PC-3 (cell line): ENCODE measurements at regions of chr16 and their contacts with region 1.

Region 1: DNA sequence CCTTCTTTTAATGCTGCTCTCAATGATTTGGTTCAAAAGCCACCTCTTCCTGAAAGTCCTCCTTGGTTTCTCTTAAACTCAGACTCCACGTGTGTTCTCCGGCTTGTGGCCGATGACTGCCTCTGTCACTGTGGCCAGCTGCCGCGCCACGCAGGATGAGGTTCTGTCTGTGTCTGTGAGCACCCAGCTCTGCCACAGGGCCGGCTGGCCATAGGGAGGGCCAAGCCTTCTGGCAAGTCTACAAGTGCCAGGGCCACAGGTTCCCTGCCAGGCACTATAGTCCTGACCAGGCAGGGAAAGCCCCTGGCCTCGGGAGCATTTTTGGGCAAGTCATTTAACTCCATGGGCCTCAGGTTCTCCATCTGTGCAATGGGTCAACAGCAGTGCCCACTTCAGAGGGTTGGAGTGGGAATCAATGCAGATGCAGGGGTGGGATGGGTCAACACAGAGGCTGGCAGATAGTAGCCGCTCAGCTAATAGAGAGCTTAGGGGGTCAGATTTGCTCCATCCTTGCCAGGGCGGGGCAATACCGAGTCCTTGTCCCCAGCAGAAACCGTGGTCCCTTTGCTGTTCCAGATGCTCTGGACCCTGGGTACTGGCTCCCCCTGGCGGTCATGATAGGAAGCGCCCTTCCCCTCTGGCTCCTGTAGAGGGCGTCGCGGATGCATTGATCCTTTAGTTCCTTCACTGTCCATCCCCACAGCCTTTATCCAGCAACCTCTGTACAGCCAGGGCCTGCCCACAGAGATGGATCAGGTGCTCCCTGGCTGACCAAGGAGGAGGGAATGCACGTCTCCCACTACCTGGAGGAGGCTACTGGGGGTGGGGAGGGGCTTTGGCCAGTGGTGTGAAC is 19.3 kb upstream of the ADGRG3 start:
- DNase-seq: peak; percentile 86
- ATAC-seq: peak; percentile 41
- H3K4me3 ChIP-seq: no peak overlapping the region
- H3K27ac ChIP-seq: no peak overlapping the region
- H3K4me1 ChIP-seq: peaks cover 31% of the 10 kb centered on the region
- H3K27me3 ChIP-seq: no peaks in the 10 kb centered on the region
- CTCF ChIP-seq: peak; percentile 100

Region 2: DNA sequence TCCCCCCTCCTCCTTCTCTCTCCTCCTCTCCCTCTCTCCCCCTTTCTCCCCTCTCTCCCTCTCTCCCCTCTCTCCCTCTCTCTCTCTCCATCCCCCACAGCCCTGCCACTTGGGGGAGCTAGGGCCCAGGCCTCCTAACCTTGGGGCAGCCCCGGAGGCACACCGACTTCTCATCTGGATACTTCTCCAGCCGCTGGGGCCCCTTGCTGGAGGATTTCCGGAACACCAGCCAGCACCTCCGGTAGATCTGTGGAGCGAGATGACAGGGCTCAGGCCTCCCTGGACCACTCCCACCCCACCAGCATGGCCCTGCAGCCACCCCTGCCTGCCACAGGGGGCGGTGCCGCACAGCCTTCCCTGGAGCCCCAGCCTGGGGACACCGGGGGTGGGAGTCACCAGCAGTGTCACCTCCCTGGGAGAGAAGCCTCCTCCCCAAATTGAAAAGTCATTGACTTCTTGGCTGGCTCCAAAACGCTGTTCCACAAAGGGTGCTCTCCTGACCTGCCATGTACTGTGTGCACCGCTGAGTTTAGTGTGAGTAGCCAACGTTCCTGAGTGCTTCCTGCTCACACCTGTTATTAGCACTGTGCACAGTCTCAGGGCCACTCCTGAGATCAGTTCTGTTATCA is 173.0 kb before region 1 on chr16:
- CTCF ChIA-PET with region 1: no interaction called
- POLR2A ChIA-PET with region 1: no interaction called
- intact Hi-C with region 1: no loop called
- DNase-seq: peak; percentile 15
- ATAC-seq: peak; percentile 73
- H3K4me3 ChIP-seq: no peak overlapping the region
- H3K27ac ChIP-seq: no peak overlapping the region
- H3K4me1 ChIP-seq: no peaks in the 10 kb centered on the region
- H3K27me3 ChIP-seq: no peaks in the 10 kb centered on the region
- CTCF ChIP-seq: peak; percentile 49

Region 3: GRCh38 chr16:57576429-57576870 is 72.4 kb before region 1 on chr16:
- CTCF ChIA-PET with region 1: interaction called, 3 read pairs
- POLR2A ChIA-PET with region 1: no interaction called
- intact Hi-C with region 1: loop called (anchors 1 kb)
- DNase-seq: peak; percentile 79
- ATAC-seq: peak; percentile 93
- H3K4me3 ChIP-seq: no peak overlapping the region
- H3K27ac ChIP-seq: no peak overlapping the region
- H3K4me1 ChIP-seq: no peaks in the 10 kb centered on the region
- H3K27me3 ChIP-seq: no peaks in the 10 kb centered on the region
- CTCF ChIP-seq: peak; percentile 87

Region 4: GRCh38 chr16:57591086-57591869 is 57.5 kb before region 1 on chr16:
- CTCF ChIA-PET with region 1: interaction called, 16 read pairs
- POLR2A ChIA-PET with region 1: interaction called, 3 read pairs
- intact Hi-C with region 1: loop called (anchors 2 kb)
- DNase-seq: peak; percentile 86
- ATAC-seq: peak; percentile 92
- H3K4me3 ChIP-seq: peak overlapping the region; percentile 60
- H3K27ac ChIP-seq: peak overlapping the region; percentile 99
- H3K4me1 ChIP-seq: peaks cover 16% of the 10 kb centered on the region
- H3K27me3 ChIP-seq: no peaks in the 10 kb centered on the region
- CTCF ChIP-seq: peak; percentile 95

Region 5: DNA sequence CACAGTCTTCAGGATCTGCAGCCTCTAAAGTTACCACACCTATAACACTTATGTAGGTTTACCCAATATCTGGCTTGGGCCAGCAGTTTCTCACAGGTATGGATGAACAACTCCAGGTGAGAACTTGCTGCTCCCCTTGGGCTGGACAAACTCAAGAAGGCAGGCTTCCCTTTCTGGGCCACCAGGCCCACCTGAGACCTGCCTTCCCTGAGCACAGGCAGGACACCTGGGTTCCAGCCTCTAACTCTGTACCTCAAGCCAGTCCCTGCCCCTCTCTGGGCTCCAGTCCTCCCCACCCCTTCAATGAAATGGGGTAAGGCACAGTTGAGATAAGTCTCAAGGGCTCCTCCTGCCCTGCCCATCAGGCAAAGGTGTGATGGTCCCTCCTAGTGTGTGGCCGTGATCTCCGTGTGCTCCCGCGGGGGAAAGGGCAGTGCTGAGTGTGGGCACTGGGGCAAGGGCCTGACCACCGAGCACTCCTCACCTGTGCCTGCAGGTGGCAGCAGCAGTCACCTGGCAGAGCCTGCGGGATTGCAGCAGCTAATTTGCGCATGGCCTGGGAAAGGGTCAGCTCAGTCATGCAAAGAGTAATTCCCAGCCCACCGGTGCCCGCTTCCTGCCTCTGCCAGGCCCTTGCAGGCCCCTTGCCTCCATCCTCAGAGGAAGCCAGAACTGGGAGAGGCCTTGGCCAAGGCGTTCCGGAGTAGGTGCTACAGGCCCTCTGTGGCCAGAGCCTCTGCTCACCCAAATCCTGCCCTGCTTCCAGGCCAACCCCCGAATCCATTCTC is 48.6 kb before region 1 on chr16:
- CTCF ChIA-PET with region 1: interaction called, 3 read pairs
- POLR2A ChIA-PET with region 1: no interaction called
- intact Hi-C with region 1: loop called (anchors 2 kb)
- DNase-seq: peak; percentile 66
- ATAC-seq: peak; percentile 98
- H3K4me3 ChIP-seq: no peak overlapping the region
- H3K27ac ChIP-seq: no peak overlapping the region
- H3K4me1 ChIP-seq: peaks cover 8% of the 10 kb centered on the region; the same call in 1 of the 2 replicates
- H3K27me3 ChIP-seq: no peaks in the 10 kb centered on the region
- CTCF ChIP-seq: peak; percentile 83

Region 6: GRCh38 chr16:57628008-57628781 is 20.6 kb before region 1 on chr16 and contains the start of gene ADGRG1:
- CTCF ChIA-PET with region 1: interaction called, 3 read pairs
- POLR2A ChIA-PET with region 1: no interaction called
- intact Hi-C with region 1: loop called (anchors 1 kb)
- DNase-seq: peak; percentile 92
- ATAC-seq: peak; percentile 76
- H3K4me3 ChIP-seq: peak within 1 kb of the TSS; percentile 71
- H3K27ac ChIP-seq: peak within 1 kb of the TSS; percentile 94
- H3K4me1 ChIP-seq: peaks cover 63% of the 10 kb centered on the region
- H3K27me3 ChIP-seq: no peaks in the 10 kb centered on the region
- CTCF ChIP-seq: peak; percentile 10; the same call in 1 of the 2 replicates
- total RNA-seq, gene ADGRG1: 33.7 and 41.5 TPM in 2 replicates

Region 7: GRCh38 chr16:58000706-58001676 is 352.2 kb after region 1 on chr16 and contains the start of gene USB1:
- CTCF ChIA-PET with region 1: no interaction called
- POLR2A ChIA-PET with region 1: no interaction called
- intact Hi-C with region 1: loop called (anchors 10 kb)
- DNase-seq: peak; percentile 80
- ATAC-seq: peak; percentile 78
- H3K4me3 ChIP-seq: peak within 1 kb of the TSS; percentile 94
- H3K27ac ChIP-seq: peak within 1 kb of the TSS; percentile 41; the same call in 1 of the 2 replicates
- H3K4me1 ChIP-seq: peaks cover 18% of the 10 kb centered on the region
- H3K27me3 ChIP-seq: no peaks in the 10 kb centered on the region
- CTCF ChIP-seq: peak; percentile 48
- total RNA-seq, gene USB1: 18.7 and 25.1 TPM in 2 replicates

Region 8: GRCh38 chr16:58152246-58152868 is 503.5 kb after region 1 on chr16:
- CTCF ChIA-PET with region 1: no interaction called
- POLR2A ChIA-PET with region 1: no interaction called
- intact Hi-C with region 1: no loop called
- DNase-seq: no peak
- ATAC-seq: no peak
- H3K4me3 ChIP-seq: no peak overlapping the region
- H3K27ac ChIP-seq: no peak overlapping the region
- H3K4me1 ChIP-seq: no peaks in the 10 kb centered on the region
- H3K27me3 ChIP-seq: no peaks in the 10 kb centered on the region
- CTCF ChIP-seq: no peak